Motor neuron (in vitro differentiated cells): ENCODE measurements at regions of chr11 and their contacts with region 1.

Region 1: DNA sequence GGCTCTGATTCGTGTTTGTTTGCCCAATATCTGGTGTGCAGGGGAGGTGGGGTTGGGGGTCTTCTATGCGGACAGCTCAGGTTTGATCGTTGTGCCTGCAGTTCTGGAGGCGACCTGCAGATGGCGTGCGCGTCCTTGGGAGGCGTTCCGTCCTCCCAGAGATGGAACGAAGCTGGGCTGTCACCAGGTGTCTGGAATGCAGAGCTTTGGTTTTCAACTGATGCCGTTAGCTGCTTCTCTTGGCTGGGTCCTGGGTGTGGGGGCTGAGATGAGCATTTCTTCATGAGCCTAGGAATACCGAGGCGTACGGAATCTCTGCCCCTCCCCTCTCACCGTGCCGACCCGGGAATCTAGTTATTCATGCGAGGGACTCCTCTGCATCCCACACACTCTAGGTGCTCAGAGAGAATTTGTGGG is 98.6 kb downstream of the CEP164 start:
- ATAC-seq: peak; percentile 63 to 91 (median 77)
- H3K4me3 ChIP-seq: no peak overlapping the region
- H3K27ac ChIP-seq: no peak overlapping the region
- H3K4me1 ChIP-seq: peaks cover 26 to 28% of the 10 kb centered on the region in 2 donors

Region 2: GRCh38 chr11:117621226-117621625 is 194.9 kb after region 1 on chr11:
- in situ Hi-C with region 1: loop called in 1 of 9 experiments (anchors 25 kb)
- ATAC-seq: peak in 1 of 8 experiments; percentile 23
- H3K4me3 ChIP-seq: no peak overlapping the region
- H3K27ac ChIP-seq: no peak overlapping the region
- H3K4me1 ChIP-seq: peaks cover 10 to 17% of the 10 kb centered on the region in 2 donors

Region 3: GRCh38 chr11:117807482-117808327 is 381.4 kb after region 1 on chr11:
- in situ Hi-C with region 1: loop called in 7 of 9 experiments (anchors 10 to 25 kb)
- ATAC-seq: peak in 5 of 8 experiments; percentile 19 to 53 (median 29)
- H3K4me3 ChIP-seq: no peak overlapping the region
- H3K27ac ChIP-seq: no peak overlapping the region
- H3K4me1 ChIP-seq: peaks cover 3 to 8% of the 10 kb centered on the region in 2 donors

Region 4: GRCh38 chr11:117817368-117818040 is 391.2 kb after region 1 on chr11:
- in situ Hi-C with region 1: loop called in 6 of 9 experiments (anchors 25 kb)
- ATAC-seq: peak; percentile 3 to 61 (median 10)
- H3K4me3 ChIP-seq: no peak overlapping the region
- H3K27ac ChIP-seq: peak overlapping the region in 1 of 2 donors; percentile 78
- H3K4me1 ChIP-seq: peaks cover 35 to 45% of the 10 kb centered on the region in 2 donors

Region 5: GRCh38 chr11:117946842-117947526 is 520.7 kb after region 1 on chr11:
- in situ Hi-C with region 1: loop called in 3 of 9 experiments (anchors 10 to 25 kb)
- ATAC-seq: peak; percentile 96 to 100 (median 96)
- H3K4me3 ChIP-seq: no peak overlapping the region
- H3K27ac ChIP-seq: no peak overlapping the region
- H3K4me1 ChIP-seq: peaks cover 0 to 6% of the 10 kb centered on the region in 2 donors

Region 6: GRCh38 chr11:118051611-118052461 is 625.6 kb after region 1 on chr11:
- in situ Hi-C with region 1: loop called in 3 of 9 experiments (anchors 25 kb)
- ATAC-seq: peak in 2 of 8 experiments; percentile 35 to 48
- H3K4me3 ChIP-seq: no peak overlapping the region
- H3K27ac ChIP-seq: no peak overlapping the region
- H3K4me1 ChIP-seq: no peaks in the 10 kb centered on the region